Activated naive CD4-positive, alpha-beta T cell treated with anti-CD3 and anti-CD28 coated beads for 36 hours (primary cell): ENCODE measurements at regions of chr6 and their contacts with region 1.

Region 1: GRCh38 chr6:28136585-28137504 is 4.8 kb upstream of the ZKSCAN8 start:
- DNase-seq: peak; percentile 82
- H3K4me3 Mint-ChIP-seq: peak overlapping the region; percentile 97
- H3K27ac Mint-ChIP-seq: peak overlapping the region; percentile 99
- H3K4me1 Mint-ChIP-seq: peaks cover 63% of the 10 kb centered on the region
- H3K27me3 Mint-ChIP-seq: no peaks in the 10 kb centered on the region

Region 2: DNA sequence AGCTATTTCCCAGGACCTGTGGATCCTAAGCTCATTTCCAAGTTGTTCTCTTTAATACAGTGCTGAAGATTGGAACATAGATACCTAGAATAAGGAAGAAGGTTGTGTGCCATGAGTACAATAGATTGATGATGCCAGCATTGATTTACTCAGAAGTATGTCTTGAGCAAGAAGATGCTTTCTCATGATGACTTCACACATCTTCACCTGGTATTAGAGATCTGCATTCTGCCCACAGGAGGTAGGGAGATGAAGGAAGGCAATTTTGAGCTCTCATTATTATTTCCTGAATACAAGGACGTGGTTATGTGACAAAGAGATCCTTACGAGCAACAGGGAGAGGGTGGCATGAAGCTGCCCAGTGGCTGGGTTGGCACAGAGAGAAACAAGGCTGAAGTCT is 76.4 kb before region 1 on chr6:
- CTCF ChIA-PET with region 1: no interaction called
- intact Hi-C with region 1: no loop called
- DNase-seq: no peak
- H3K4me3 Mint-ChIP-seq: no peak overlapping the region
- H3K27ac Mint-ChIP-seq: no peak overlapping the region
- H3K4me1 Mint-ChIP-seq: no peaks in the 10 kb centered on the region
- H3K27me3 Mint-ChIP-seq: peaks cover 26% of the 10 kb centered on the region

Region 3: DNA sequence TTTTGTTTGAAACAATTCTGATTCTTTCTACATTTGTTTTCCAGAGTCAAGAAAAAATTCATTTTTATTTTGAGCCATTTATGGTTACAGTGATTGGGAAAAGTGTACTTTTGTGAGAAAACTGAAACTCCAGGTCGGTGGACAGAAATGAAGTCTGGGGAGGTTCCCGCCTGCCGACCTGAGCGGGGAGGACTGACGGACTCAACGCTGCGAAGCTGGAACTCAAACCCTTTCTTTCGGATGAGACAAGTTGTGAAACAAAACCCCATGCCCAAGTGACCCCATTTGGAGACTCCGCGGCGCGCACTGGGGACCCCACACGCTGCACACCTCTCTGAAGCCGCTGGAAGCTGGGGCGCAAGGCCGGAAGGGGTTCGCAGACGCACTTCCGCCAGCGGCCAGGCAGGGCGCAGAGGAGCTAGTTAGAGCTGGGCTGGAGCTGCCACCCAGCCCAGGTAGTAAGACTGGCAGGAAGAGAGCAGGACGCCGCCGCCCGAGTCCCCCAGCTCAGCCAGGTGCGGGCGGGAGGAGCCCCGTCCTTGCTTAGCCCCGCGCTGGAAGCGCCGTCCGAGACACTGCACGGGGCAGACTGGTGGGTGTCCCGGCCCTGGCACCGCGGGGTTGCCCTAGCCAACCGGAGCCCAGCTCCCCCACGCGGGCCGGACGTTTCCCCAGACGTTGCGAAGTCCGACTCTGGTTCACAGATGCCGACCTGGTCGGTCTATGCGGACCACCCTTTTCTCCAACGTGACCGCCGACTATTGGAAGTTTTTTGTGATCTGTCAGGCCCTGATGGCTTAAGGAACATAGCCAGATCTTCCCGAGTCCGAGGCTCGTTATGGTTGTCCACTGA is 32.2 kb before region 1 on chr6:
- CTCF ChIA-PET with region 1: no interaction called
- intact Hi-C with region 1: loop called (anchors 1 kb)
- DNase-seq: peak; percentile 89
- H3K4me3 Mint-ChIP-seq: peak overlapping the region; percentile 89
- H3K27ac Mint-ChIP-seq: peak overlapping the region; percentile 89
- H3K4me1 Mint-ChIP-seq: peaks cover 9% of the 10 kb centered on the region
- H3K27me3 Mint-ChIP-seq: peaks cover 10% of the 10 kb centered on the region

Region 4: DNA sequence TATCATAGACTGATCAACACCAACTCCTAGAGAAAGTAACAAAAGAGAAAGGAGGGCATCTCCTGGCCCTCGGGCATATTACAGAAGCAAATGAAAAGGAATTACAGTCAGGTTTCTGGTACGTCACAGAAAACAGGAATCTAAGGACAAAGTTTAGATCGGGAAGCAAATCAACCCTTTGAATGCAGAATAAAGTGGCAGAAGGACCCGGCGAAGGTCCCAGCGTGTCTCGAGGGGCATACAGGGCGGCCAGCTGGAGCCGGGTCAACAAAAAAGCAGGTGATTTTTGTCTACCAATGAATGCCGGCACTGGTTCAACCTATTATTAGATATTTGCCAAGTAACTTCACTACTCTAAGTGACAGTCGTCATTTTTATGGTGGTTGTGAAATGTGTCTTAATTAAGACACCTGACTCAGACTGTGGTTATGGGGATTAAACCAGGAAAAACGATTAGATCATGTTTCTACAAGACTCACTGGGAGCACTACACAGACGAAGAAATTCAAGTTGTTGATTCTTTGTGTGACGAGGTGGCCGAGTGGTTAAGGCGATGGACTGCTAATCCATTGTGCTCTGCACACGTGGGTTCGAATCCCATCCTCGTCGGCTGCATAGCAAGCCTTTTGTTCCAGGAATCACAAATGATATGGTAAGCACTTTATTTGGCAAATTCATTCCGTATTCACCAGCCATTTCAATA is 75.8 kb after region 1 on chr6:
- CTCF ChIA-PET with region 1: no interaction called
- intact Hi-C with region 1: loop called (anchors 2 kb)
- DNase-seq: peak; percentile 86
- H3K4me3 Mint-ChIP-seq: peak overlapping the region; percentile 70
- H3K27ac Mint-ChIP-seq: peak overlapping the region; percentile 38
- H3K4me1 Mint-ChIP-seq: peaks cover 18% of the 10 kb centered on the region
- H3K27me3 Mint-ChIP-seq: peaks cover 72% of the 10 kb centered on the region

Region 5: DNA sequence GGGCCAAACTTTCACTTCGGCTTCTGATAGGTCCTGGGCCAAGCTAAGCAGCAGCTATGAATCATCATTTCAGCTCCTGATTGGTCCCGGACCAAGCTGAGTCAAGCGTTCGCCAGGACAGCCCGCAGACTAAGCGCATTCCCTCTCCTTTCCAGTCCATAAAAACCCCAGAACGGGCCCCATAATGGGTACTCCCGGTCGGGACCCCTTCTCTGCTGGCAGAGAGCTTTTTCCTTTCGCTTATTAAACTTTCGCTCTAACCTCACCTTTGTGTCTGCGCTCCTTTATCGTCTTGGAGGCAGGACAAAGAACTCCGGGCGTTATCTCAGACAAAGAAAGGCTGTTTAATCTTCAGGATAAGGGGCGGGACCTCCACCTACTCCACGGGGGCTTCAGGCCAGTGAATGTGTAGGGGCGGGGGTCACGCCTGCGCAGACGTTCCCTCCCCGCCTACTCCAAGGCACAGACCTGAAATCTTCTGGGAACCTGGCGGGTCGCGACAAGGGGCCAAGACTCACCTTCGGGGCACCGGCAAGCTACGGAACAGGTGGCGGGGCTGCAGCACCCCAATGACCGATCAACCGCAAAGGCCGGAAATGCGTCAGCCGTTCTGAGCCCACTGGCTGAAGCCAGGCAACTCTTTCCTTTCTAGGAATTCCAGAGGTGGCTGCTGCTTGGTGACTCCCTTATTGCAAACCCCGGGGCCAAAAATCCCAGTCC is 198.9 kb after region 1 on chr6 and contains the start of gene ZSCAN31:
- CTCF ChIA-PET with region 1: no interaction called
- intact Hi-C with region 1: loop called (anchors 1 kb)
- DNase-seq: peak; percentile 90
- H3K4me3 Mint-ChIP-seq: no peak within 1 kb of the TSS
- H3K27ac Mint-ChIP-seq: no peak within 1 kb of the TSS
- H3K4me1 Mint-ChIP-seq: peaks cover 4% of the 10 kb centered on the region
- H3K27me3 Mint-ChIP-seq: no peaks in the 10 kb centered on the region
- total RNA-seq, gene ZSCAN31: 0.62 to 0.89 TPM

Region 6: GRCh38 chr6:28443112-28443773 is 306.4 kb after region 1 on chr6 and contains the start of gene ZSCAN23:
- CTCF ChIA-PET with region 1: no interaction called
- intact Hi-C with region 1: loop called (anchors 5 kb)
- DNase-seq: peak; percentile 93
- H3K4me3 Mint-ChIP-seq: peak within 1 kb of the TSS; percentile 98
- H3K27ac Mint-ChIP-seq: peak within 1 kb of the TSS; percentile 87
- H3K4me1 Mint-ChIP-seq: peaks cover 31% of the 10 kb centered on the region
- H3K27me3 Mint-ChIP-seq: peaks cover 24% of the 10 kb centered on the region
- total RNA-seq, gene ZSCAN23: 1.7 to 2.0 TPM

Region 7: GRCh38 chr6:28895134-28895812 is 758.4 kb after region 1 on chr6:
- CTCF ChIA-PET with region 1: no interaction called
- intact Hi-C with region 1: loop called (anchors 10 kb)
- DNase-seq: peak; percentile 98
- H3K4me3 Mint-ChIP-seq: peak overlapping the region; percentile 96
- H3K27ac Mint-ChIP-seq: peak overlapping the region; percentile 100
- H3K4me1 Mint-ChIP-seq: peaks cover 6% of the 10 kb centered on the region
- H3K27me3 Mint-ChIP-seq: peaks cover 3% of the 10 kb centered on the region